Caco-2 (cell line): ENCODE measurements at regions of chr3 and their contacts with region 1.

Region 1: GRCh38 chr3:183291497-183292040 is 38.5 kb downstream of the B3GNT5 start:
- DNase-seq: peak in 1 of 2 experiments; percentile 38
- H3K4me3 ChIP-seq: no peak overlapping the region
- H3K4me3 Mint-ChIP-seq: no peak overlapping the region
- H3K27ac Mint-ChIP-seq: no peak overlapping the region
- H3K4me1 ChIP-seq: peaks cover 10% of the 10 kb centered on the region
- H3K4me1 Mint-ChIP-seq: peaks cover 6% of the 10 kb centered on the region
- H3K27me3 ChIP-seq: no peaks in the 10 kb centered on the region
- H3K27me3 Mint-ChIP-seq: no peaks in the 10 kb centered on the region
- CTCF ChIP-seq: no peak

Region 2: DNA sequence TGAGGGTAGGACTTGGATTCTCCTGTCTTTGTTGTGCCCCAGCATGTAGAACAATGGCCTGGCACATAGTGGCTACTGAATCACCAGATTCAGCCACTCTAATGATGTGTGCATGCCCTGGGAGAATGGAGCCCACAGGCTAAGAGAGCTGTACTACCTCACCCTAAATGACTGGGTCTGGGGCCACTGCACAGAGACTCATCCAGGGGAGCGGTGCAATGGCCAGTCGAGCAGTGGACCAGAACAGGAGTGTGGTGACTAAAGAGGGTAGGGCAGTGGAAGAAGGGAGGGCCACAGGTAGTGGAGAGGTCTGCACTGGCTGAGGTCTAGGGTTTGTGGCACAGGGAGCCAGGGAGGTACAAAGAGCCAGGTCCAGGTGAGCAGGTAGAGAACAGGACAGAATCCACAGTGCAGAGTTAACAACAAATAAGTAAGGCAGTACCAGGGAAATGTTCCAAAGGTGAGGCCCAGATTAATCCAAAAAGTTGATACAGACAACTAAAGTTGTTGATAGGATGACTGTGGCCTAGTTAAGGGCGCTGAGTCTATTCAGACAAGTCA is 640.9 kb before region 1 on chr3:
- CTCF ChIA-PET with region 1: no interaction called
- POLR2A ChIA-PET with region 1: no interaction called
- intact Hi-C with region 1: no loop called
- DNase-seq: no peak
- H3K4me3 ChIP-seq: no peak overlapping the region
- H3K4me3 Mint-ChIP-seq: peak overlapping the region; percentile 25
- H3K27ac Mint-ChIP-seq: peak overlapping the region; percentile 72
- H3K4me1 ChIP-seq: peaks cover 23% of the 10 kb centered on the region
- H3K4me1 Mint-ChIP-seq: peaks cover 16% of the 10 kb centered on the region
- H3K27me3 ChIP-seq: no peaks in the 10 kb centered on the region
- H3K27me3 Mint-ChIP-seq: no peaks in the 10 kb centered on the region
- CTCF ChIP-seq: no peak

Region 3: DNA sequence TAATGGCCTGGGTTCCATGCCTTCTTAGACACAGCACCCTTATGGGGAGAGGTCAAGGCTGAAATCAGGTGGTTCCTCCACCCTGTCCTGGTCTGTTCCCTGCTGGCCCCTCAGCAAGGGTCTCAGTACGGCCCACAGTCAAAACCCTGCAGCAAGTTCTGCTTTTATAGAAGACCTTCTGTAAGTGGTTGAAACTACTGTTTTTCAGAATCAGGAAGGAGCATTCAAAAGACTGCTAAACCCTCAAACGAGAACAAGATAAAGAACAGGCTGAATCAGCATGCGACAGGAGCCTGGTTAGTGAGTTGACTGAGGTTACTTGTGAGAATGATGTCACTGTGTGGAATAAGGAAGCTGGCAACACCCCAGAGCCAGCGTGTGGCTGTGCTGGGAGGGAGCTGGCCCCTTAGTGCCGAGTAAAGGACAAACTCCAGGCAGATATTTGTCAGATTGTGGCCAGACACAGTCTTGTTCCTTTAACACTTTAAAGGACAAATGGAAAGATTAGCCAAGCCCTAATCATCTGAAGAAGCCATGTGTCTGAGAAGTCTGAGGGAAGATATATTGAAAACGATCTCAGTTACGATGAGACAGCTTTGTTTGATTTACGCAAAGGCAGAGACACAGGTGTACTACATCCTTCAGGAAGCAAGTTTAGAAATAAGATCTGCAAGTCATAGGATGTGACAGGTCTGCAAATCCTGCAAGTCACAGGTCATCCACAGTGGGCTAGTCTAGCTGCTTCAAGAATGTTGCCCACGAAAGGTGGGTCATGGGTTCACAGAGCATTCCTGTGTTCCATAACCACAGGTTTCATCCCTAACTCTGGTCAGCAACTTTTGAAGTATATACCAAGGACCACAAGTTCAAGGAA is 15.5 kb after region 1 on chr3:
- CTCF ChIA-PET with region 1: no interaction called
- POLR2A ChIA-PET with region 1: no interaction called
- intact Hi-C with region 1: loop called (anchors 2 kb)
- DNase-seq: peak; percentile 20 to 55
- H3K4me3 ChIP-seq: no peak overlapping the region
- H3K4me3 Mint-ChIP-seq: no peak overlapping the region
- H3K27ac Mint-ChIP-seq: peak overlapping the region; percentile 68
- H3K4me1 ChIP-seq: peaks cover 20% of the 10 kb centered on the region
- H3K4me1 Mint-ChIP-seq: peaks cover 29% of the 10 kb centered on the region
- H3K27me3 ChIP-seq: no peaks in the 10 kb centered on the region
- H3K27me3 Mint-ChIP-seq: no peaks in the 10 kb centered on the region
- CTCF ChIP-seq: no peak